Activated CD4-positive, alpha-beta T cell treated with anti-CD3 and anti-CD28 coated beads for 36 hours (primary cell): ENCODE measurements at regions of chr1 and their contacts with region 1.

Region 1: GRCh38 chr1:180482425-180483275 is 19.7 kb downstream of the ACBD6 start:
- DNase-seq: no peak
- ATAC-seq: peak; percentile 64
- H3K4me3 Mint-ChIP-seq: no peak overlapping the region
- H3K27ac Mint-ChIP-seq: no peak overlapping the region
- H3K4me1 Mint-ChIP-seq: peaks cover 17% of the 10 kb centered on the region
- H3K27me3 Mint-ChIP-seq: no peaks in the 10 kb centered on the region

Region 2: GRCh38 chr1:180042988-180043622 is 439.5 kb before region 1 on chr1:
- CTCF ChIA-PET with region 1: no interaction called
- POLR2A ChIA-PET with region 1: interaction called, 12 read pairs
- intact Hi-C with region 1: no loop called
- DNase-seq: no peak
- ATAC-seq: no peak
- H3K4me3 Mint-ChIP-seq: no peak overlapping the region
- H3K27ac Mint-ChIP-seq: no peak overlapping the region
- H3K4me1 Mint-ChIP-seq: peaks cover 5% of the 10 kb centered on the region
- H3K27me3 Mint-ChIP-seq: no peaks in the 10 kb centered on the region

Region 3: DNA sequence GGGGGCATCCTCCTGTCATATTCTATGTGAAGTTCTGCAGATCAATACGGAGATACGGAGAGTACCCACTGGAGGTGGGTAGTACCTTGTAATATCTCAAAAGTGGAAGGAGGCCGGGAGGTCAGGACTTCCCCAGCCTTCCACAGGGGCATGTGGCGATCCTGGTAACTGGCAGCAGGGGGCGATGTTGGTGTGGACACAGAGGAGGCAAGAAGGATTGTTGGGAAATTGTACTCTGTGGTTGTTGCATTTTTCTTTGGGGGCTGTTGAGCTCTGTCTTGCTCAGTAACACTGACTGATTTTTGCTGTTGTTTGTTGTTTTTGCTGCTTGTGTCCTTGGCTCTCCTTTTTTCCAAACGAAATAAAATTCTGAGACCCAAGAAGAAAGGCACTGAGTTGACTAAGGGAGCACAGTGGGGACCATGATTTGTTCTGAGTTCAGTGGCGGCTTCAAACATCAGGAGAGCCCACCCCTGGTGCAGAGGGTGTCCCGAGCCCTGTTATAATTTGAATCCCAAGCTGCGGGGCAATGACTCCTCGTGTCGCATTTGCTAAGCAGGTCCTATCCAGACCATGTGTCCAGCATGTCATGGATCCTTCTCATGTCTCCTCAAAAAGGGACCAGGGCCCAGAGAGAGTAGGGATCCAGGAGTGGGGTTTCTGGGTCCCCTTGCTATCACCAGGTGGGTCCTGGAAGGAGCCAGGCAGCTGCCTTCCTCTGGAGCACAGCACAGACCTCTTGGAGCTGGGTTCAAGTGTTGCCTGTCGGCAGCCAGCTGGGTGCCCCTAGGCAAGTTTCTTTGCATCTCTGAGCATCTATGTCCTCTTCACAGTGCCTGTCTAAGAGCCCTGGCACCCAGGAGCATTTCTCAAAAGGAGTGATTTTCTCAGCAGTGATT is 229.8 kb before region 1 on chr1:
- CTCF ChIA-PET with region 1: interaction called, 11 read pairs
- POLR2A ChIA-PET with region 1: no interaction called
- intact Hi-C with region 1: loop called (anchors 1 kb)
- DNase-seq: peak; percentile 87
- ATAC-seq: peak; percentile 85
- H3K4me3 Mint-ChIP-seq: no peak overlapping the region
- H3K27ac Mint-ChIP-seq: no peak overlapping the region
- H3K4me1 Mint-ChIP-seq: no peaks in the 10 kb centered on the region
- H3K27me3 Mint-ChIP-seq: peaks cover 34% of the 10 kb centered on the region

Region 4: DNA sequence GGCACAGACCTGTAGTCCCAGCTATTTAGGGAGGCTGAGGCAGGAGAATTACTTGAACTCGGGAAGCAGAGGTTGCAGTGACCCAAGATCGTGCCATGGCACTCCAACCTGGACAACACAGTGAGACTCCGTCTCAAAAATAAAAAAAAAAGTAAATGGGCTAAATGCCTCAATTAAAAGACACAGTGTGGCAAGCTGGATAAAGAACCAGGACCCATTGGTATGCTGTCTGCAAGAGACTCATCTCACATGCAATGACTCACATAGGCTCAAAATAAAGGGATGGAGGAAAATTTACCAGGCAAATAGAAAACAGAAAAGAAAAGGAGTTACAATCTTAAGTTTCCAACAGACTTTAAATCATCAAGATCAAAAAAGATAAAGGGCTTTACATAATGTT is 20.5 kb before region 1 on chr1:
- CTCF ChIA-PET with region 1: interaction called, 25 read pairs
- POLR2A ChIA-PET with region 1: no interaction called
- intact Hi-C with region 1: no loop called
- DNase-seq: no peak
- ATAC-seq: no peak
- H3K4me3 Mint-ChIP-seq: no peak overlapping the region
- H3K27ac Mint-ChIP-seq: no peak overlapping the region
- H3K4me1 Mint-ChIP-seq: peaks cover 12% of the 10 kb centered on the region
- H3K27me3 Mint-ChIP-seq: no peaks in the 10 kb centered on the region